ENCODE measurements at regions of chr18 and their contacts with region 1.

Region 1: GRCh38 chr18:63936156-63936931 is 12.8 kb upstream of the HMSD start:
- DNase-seq: peak; percentile 89
- ATAC-seq: peak; percentile 96 to 99

Region 2: GRCh38 chr18:63697107-63697660 is 239.2 kb before region 1 on chr18:
- intact Hi-C with region 1: no loop called
- DNase-seq: no peak
- ATAC-seq: no peak

Region 3: DNA sequence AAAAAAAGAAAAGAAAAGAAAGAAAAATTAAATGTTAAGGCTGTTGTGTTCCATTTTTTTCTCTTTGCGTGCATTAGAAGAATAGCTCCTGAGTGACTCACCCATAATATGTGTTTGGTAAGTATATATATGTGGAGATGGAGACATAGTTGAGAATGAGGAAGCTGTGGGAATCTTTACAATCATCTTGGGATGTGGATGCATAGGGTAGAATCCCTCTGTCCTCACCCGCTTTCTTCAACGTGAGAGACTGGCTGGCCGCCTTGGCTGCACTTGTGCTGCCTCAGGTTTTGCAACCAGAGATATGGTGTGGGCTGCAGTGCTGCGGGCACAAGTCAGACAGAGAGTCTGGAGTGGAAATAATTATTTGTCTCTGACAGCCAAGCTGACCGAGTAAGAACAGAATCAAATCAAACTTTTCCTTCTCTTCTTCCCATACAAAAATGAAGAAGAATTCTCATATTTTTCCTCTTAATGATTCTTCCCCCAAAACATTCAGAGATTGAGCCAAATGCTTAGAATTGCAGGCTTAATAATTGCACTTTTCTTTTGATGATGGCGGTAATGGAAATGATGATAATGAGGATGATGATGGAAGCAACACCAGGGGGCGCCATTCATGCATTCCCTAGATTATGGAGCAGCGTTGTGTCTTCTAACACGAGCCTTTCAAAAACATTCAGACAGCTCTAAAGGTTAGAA is 112.7 kb before region 1 on chr18:
- intact Hi-C with region 1: loop called in 1 of 2 experiments (anchors 2 kb)
- DNase-seq: peak; percentile 55
- ATAC-seq: no peak

Region 4: DNA sequence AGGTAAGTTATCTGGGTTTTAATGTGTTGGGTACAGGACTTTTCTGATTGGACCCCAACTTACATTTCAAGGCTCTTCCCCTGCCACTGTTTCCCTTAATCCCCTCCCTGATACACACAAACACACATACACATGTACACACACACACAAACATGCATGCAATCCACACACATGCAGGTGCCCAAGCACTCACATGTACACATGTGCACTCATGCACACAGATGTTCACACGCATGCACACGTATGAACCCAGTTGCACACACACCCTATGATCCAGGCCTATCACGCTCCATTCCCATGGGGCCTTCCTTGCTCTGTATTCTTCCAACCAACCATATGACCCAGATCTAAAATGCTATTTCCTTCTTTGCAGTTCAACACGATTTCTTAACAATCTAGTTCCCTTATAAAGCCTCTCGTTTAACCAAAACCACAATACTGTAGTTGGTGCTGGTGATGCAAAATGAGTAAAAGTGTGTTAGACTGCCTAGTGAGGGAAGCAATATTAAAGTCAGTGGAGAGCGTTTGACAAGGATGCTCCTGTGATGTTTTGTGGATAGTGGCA is 44.6 kb after region 1 on chr18:
- intact Hi-C with region 1: loop called in 1 of 2 experiments (anchors 10 kb)
- DNase-seq: no peak
- ATAC-seq: no peak

Region 5: GRCh38 chr18:64090876-64091275 is 154.5 kb after region 1 on chr18:
- intact Hi-C with region 1: no loop called
- DNase-seq: no peak
- ATAC-seq: no peak

Measured in left cardiac atrium (tissue), 4 donors.